Panc1 (cell line): ENCODE measurements at regions of chr2 and their contacts with region 1.

Region 1: DNA sequence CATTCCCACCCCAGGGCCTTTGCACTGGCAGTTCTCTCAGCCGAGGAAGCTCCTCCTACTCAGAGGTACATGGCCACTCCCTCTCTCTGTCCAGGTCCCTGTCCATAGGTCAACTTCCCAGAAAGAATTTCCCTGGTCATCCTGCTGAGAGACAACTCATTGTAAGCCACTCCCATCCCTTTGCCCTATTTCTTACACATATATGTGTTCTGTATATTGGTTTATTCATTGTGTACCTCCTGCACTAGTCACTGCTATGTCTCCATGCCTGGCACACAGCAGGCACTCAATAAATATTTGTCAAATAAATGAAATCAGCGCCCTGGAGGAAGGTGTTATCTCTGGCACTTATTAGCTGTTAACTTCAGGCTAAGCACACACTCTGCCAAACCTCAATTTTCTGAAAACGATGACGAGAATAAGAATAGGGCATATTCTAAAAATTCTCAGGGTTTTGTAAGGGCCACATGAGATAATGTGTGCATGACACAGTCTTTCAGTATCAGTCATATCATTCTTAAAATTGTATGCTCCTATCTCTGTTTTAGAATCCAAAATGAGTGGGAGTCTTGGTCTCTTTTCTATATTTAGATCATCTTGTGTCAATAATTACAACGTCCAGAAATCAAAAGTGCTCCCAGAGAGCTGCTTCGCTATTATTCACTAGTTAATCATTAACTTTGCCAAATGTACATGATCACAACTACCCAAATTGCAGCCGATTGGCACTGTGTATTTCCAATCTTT is 198.0 kb downstream of the ALK start:
- DNase-seq: no peak
- ATAC-seq: no peak
- H3K4me3 ChIP-seq: no peak overlapping the region
- H3K27ac ChIP-seq: no peak overlapping the region
- H3K4me1 ChIP-seq: no peaks in the 10 kb centered on the region
- H3K27me3 ChIP-seq: no peaks in the 10 kb centered on the region
- CTCF ChIP-seq: no peak

Region 2: DNA sequence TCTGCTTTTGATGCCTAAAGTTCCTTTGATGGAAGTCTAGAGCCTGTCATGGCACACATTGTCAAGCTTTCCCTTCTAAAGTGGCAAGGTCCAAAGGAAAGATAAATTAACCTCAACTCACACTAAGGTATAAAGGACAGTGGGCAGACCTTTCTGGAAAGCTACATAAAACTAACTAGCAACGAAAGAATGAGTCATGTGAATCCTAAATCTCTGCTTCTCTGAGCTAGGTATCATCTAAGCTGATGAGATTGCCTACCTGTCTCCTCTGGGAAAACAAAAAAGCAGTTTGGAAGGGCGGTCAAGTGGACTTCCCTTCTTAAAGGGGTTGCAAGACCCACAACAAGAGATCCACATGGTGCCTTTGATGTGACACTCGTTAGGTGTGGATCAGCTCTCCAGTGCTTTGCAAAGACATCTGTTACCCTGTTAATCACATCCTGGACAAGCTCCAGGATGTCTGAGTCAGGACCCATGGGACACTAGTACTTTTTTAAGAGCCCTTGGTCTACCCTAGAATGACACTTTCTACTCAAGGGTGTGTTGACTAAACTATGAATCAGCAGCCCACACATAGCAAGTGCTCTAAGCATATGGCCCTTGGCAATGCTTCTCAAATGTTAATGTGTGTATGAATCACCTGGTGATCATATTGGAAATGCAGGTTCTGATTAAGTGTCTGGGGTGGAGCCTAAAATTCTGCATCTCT is 24.5 kb after region 1 on chr2:
- CTCF ChIA-PET with region 1: no interaction called
- POLR2A ChIA-PET with region 1: no interaction called
- in situ Hi-C with region 1: no loop called
- intact Hi-C with region 1: loop called (anchors 1 kb)
- DNase-seq: peak; percentile 100
- ATAC-seq: peak; percentile 93
- H3K4me3 ChIP-seq: no peak overlapping the region
- H3K27ac ChIP-seq: no peak overlapping the region
- H3K4me1 ChIP-seq: no peaks in the 10 kb centered on the region
- H3K27me3 ChIP-seq: no peaks in the 10 kb centered on the region
- CTCF ChIP-seq: no peak